ENCODE measurements at regions of chr6 and their contacts with region 1.

Region 1: DNA sequence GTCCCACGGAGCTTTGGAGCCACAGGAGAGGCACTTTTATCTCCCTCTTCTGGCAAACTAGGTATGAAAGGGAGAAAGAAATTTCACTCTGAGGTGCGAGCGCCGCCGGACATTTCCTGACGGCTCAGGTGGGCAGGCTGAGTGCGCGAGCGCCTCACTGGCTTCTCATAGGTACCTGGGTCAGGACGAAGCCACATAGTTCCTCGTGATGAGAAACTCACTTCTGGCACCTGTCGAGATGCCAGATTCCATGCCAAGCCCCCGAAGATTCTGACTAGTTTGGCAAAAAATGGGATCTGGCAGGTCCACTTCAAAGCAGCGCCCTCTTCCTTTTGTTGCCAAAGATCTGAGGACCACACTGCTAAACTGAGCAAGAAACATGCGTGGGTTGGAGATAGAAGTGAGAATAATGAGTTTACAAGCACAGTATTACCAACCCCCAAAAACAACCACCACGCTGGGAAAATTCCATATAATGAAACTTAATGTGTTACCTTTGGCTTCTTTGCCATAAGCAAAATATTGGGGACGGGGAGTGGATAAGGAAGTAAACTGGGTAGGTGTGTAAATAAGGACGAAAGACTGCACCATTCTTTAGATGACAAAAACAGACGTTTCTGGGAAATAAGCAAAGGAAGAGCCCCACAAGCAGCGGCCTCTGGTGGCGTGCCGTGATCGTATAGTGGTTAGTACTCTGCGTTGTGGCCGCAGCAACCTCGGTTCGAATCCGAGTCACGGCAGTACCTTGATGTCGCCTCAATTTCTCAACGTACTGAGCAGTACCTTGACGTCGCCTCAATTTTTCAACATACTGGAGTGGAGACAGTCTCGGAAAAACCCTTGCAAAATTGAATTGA is 89.8 kb upstream of the PRSS16 start:
- DNase-seq: peak in 8 of 9 donors; percentile 77 to 92 (median 87)
- ATAC-seq: peak; percentile 86
- H3K4me3 ChIP-seq: peak overlapping the region; percentile 76
- H3K4me3 Mint-ChIP-seq: peak overlapping the region; percentile 82 to 94 (median 87)
- H3K27ac ChIP-seq: peak overlapping the region; percentile 54
- H3K27ac Mint-ChIP-seq: peak overlapping the region; percentile 80 to 96 (median 92)
- H3K4me1 ChIP-seq: peaks cover 12% of the 10 kb centered on the region in 2 donors
- H3K4me1 Mint-ChIP-seq: peaks cover 29 to 47% (median 43%) of the 10 kb centered on the region in 7 donors
- H3K27me3 ChIP-seq: no peaks in the 10 kb centered on the region
- H3K27me3 Mint-ChIP-seq: peaks cover 0 to 6% (median 0%) of the 10 kb centered on the region in 5 donors

Region 2: GRCh38 chr6:26607434-26608230 is 550.1 kb before region 1 on chr6:
- CTCF ChIA-PET with region 1: interaction called, 3 read pairs
- POLR2A ChIA-PET with region 1: no interaction called
- intact Hi-C with region 1: loop called (anchors 1 to 5 kb)
- DNase-seq: peak in 8 of 9 donors; percentile 37 to 75 (median 70)
- ATAC-seq: peak; percentile 95
- H3K4me3 ChIP-seq: peak overlapping the region; percentile 46
- H3K4me3 Mint-ChIP-seq: peak overlapping the region; percentile 19 to 79 (median 56)
- H3K27ac ChIP-seq: no peak overlapping the region
- H3K27ac Mint-ChIP-seq: peak overlapping the region in 7 of 9 donors; percentile 22 to 68 (median 55)
- H3K4me1 ChIP-seq: no peaks in the 10 kb centered on the region
- H3K4me1 Mint-ChIP-seq: peaks cover 6 to 14% (median 10%) of the 10 kb centered on the region in 7 donors
- H3K27me3 ChIP-seq: no peaks in the 10 kb centered on the region
- H3K27me3 Mint-ChIP-seq: peaks cover 0 to 20% (median 5%) of the 10 kb centered on the region in 5 donors

Region 3: DNA sequence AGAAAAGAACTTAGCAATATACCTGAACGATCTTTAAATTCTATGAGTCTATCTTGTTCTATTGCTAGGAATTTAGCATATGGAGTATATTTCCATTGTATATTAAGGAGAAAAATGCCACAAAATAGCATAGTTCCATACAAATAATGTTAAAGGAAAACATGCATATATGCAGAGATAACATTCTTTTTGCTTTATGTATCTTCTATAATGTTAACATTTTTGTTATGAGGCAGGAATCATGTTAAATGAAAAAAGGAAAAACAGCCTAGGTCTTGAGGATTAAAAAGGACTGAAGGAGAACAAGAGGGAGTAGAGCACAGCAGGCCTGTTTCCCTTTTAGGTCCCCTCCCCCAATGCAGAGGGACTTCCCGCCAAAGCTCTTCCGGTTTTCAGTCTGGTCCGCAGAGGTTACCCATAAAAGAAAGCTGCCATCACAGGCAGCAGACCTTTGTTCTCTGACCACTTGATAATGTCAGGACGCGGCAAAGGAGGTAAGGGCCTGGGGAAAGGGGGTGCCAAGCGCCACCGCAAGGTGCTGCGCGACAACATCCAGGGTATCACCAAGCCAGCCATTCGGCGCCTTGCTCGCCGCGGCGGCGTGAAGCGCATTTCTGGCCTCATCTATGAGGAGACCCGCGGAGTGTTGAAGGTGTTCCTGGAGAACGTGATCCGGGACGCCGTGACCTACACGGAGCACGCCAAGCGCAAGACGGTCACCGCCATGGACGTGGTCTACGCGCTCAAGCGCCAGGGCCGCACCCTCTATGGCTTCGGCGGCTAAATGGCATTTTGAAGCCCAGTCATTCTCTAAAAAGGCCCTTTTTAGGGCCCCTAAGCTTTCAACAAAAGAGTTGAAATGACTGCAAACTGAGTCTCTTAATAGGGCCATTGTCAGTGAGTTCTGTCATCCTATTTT is 18.6 kb before region 1 on chr6:
- CTCF ChIA-PET with region 1: interaction called, 4 read pairs
- POLR2A ChIA-PET with region 1: interaction called, 795 read pairs
- intact Hi-C with region 1: no loop called
- DNase-seq: peak; percentile 39 to 78 (median 67)
- ATAC-seq: peak; percentile 90
- H3K4me3 ChIP-seq: peak overlapping the region; percentile 74
- H3K4me3 Mint-ChIP-seq: peak overlapping the region; percentile 90 to 99 (median 98)
- H3K27ac ChIP-seq: peak overlapping the region; percentile 86
- H3K27ac Mint-ChIP-seq: peak overlapping the region; percentile 97 to 99 (median 98)
- H3K4me1 ChIP-seq: peaks cover 19 to 26% of the 10 kb centered on the region in 2 donors
- H3K4me1 Mint-ChIP-seq: peaks cover 29 to 80% (median 60%) of the 10 kb centered on the region in 7 donors
- H3K27me3 ChIP-seq: no peaks in the 10 kb centered on the region
- H3K27me3 Mint-ChIP-seq: no peaks in the 10 kb centered on the region

Region 4: DNA sequence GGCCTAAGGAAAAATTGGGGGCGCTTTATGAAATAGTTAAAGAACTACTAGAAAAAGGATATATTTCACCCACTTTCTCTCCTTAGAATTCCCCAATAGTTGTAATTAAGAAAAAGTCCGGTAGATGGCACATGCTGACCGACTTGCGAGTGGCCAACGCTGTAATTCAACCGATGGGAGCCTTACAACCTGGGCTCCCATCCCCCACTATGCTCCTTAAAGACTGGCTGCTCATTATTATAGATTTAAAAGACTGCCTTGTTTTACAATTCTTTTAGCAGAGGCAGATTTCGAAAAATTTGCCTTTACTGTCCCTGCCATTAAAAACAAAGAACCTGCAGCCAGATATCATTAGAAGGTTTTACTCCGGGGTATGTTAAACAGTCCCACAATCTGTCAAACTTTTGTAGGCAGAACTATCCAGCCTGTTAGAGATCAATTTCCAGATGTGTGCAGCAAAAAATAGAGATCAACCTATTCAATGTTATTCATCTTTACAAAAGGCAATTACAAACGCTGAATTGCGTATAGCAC is 31.3 kb after region 1 on chr6:
- CTCF ChIA-PET with region 1: interaction called, 4 read pairs
- POLR2A ChIA-PET with region 1: no interaction called
- intact Hi-C with region 1: loop called (anchors 1 kb)
- DNase-seq: peak in 8 of 9 donors; percentile 44 to 69 (median 65)
- ATAC-seq: peak; percentile 90
- H3K4me3 ChIP-seq: peak overlapping the region; percentile 81
- H3K4me3 Mint-ChIP-seq: peak overlapping the region; percentile 82 to 99 (median 93)
- H3K27ac ChIP-seq: peak overlapping the region; percentile 58
- H3K27ac Mint-ChIP-seq: peak overlapping the region in 8 of 9 donors; percentile 44 to 79 (median 64)
- H3K4me1 ChIP-seq: peaks cover 3% of the 10 kb centered on the region in 2 donors
- H3K4me1 Mint-ChIP-seq: peaks cover 9 to 20% (median 15%) of the 10 kb centered on the region in 7 donors
- H3K27me3 ChIP-seq: no peaks in the 10 kb centered on the region
- H3K27me3 Mint-ChIP-seq: peaks cover 0 to 3% (median 0%) of the 10 kb centered on the region in 5 donors

Region 5: GRCh38 chr6:27293436-27294098 is 135.9 kb after region 1 on chr6:
- CTCF ChIA-PET with region 1: no interaction called
- POLR2A ChIA-PET with region 1: no interaction called
- intact Hi-C with region 1: no loop called
- DNase-seq: no peak
- ATAC-seq: no peak
- H3K4me3 ChIP-seq: no peak overlapping the region
- H3K4me3 Mint-ChIP-seq: peak overlapping the region in 2 of 10 donors; percentile 11 to 43
- H3K27ac ChIP-seq: no peak overlapping the region
- H3K27ac Mint-ChIP-seq: peak overlapping the region in 6 of 9 donors; percentile 7 to 67 (median 38)
- H3K4me1 ChIP-seq: no peaks in the 10 kb centered on the region
- H3K4me1 Mint-ChIP-seq: peaks cover 0 to 5% (median 0%) of the 10 kb centered on the region in 7 donors
- H3K27me3 ChIP-seq: peaks cover 25 to 82% of the 10 kb centered on the region in 2 donors
- H3K27me3 Mint-ChIP-seq: peaks cover 81 to 95% (median 93%) of the 10 kb centered on the region in 5 donors

Region 6: DNA sequence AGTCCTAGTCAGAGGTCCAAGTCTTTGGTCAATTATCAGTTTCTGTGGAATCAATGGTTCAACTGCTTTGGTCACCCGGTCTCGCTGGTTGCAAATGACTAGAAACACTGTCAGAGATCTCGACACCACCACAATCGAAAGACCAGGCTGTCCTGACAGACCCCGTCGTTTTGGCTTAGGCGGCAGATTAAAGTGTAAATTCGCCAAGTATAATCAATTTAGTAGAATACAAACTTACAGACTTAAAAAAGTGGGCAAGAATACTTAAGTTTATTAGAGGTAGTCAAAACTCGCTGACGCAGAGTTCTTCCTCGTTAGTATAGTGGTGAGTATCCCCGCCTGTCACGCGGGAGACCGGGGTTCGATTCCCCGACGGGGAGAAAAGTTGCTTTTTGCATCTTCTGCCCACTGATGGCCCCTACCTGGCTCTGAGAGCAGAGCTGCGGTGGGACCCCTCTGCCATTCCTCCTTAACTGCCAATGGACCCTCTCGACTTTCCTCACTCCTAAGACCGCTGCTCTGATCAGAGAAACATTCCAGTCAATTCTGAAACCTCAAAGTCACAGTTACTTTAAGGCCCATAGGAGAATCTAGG is 345.8 kb after region 1 on chr6:
- CTCF ChIA-PET with region 1: no interaction called
- POLR2A ChIA-PET with region 1: no interaction called
- intact Hi-C with region 1: loop called in 1 of 2 experiments (anchors 5 kb)
- DNase-seq: peak; percentile 73 to 86 (median 80)
- ATAC-seq: peak; percentile 75
- H3K4me3 ChIP-seq: peak overlapping the region; percentile 61
- H3K4me3 Mint-ChIP-seq: peak overlapping the region; percentile 85 to 99 (median 91)
- H3K27ac ChIP-seq: peak overlapping the region; percentile 57
- H3K27ac Mint-ChIP-seq: peak overlapping the region; percentile 82 to 97 (median 91)
- H3K4me1 ChIP-seq: peaks cover 6% of the 10 kb centered on the region in 2 donors
- H3K4me1 Mint-ChIP-seq: peaks cover 15 to 41% (median 36%) of the 10 kb centered on the region in 7 donors
- H3K27me3 ChIP-seq: no peaks in the 10 kb centered on the region
- H3K27me3 Mint-ChIP-seq: peaks cover 5 to 62% (median 11%) of the 10 kb centered on the region in 5 donors

Region 7: GRCh38 chr6:27772261-27773001 is 614.7 kb after region 1 on chr6:
- CTCF ChIA-PET with region 1: interaction called, 3 read pairs
- POLR2A ChIA-PET with region 1: no interaction called
- intact Hi-C with region 1: loop called in 1 of 2 experiments (anchors 1 kb)
- DNase-seq: peak; percentile 72 to 88 (median 82)
- ATAC-seq: peak; percentile 98
- H3K4me3 ChIP-seq: no peak overlapping the region
- H3K4me3 Mint-ChIP-seq: peak overlapping the region in 6 of 10 donors; percentile 14 to 59 (median 34)
- H3K27ac ChIP-seq: no peak overlapping the region
- H3K27ac Mint-ChIP-seq: peak overlapping the region in 2 of 9 donors; percentile 7 to 8
- H3K4me1 ChIP-seq: peaks cover 3 to 5% of the 10 kb centered on the region in 2 donors
- H3K4me1 Mint-ChIP-seq: peaks cover 6 to 20% (median 7%) of the 10 kb centered on the region in 7 donors
- H3K27me3 ChIP-seq: no peaks in the 10 kb centered on the region
- H3K27me3 Mint-ChIP-seq: peaks cover 1 to 35% (median 10%) of the 10 kb centered on the region in 5 donors

Region 8: DNA sequence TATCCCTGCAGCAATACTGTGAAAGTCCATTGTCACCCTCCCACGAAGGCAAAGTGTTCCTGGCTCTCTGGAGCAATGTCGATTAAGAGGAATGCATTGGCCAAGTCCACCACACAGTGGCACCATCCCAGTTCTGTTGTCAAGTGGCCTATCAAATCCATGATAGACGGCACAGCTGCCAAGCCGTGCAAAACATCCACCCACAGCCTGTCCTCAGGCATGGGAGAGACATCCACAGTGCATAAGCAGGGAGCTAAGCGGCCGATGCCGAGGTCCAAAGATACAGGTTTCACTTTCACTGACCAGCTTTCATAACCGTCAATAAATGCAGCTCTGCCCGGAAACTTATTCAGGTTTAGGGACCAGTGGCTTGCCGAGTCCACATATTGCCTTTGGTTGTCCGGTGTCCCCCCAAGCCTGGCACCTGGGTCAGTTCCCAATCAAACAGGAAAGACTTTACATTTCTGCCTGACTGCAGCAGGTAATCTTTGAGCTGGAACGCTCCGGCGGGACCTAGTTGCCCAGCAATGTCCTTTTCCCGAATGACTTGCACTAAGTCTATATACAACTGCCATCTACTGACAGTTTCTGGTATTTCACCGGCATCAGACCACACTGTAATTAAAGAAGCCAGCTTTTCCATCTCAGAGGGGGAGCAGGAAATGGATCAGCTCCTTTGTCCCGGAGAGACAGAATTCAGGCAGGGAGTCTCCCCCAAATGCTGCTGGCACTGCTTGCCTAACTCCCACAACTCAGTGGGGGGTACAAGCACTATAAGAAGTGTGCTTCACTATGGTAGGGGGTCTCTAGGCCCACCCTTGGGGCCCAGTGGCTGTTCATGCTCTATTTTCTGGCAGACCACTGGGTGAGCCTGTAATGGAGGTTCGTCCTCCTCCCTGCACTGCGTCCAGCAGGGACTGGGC is 1198.3 kb after region 1 on chr6:
- CTCF ChIA-PET with region 1: no interaction called
- POLR2A ChIA-PET with region 1: no interaction called
- intact Hi-C with region 1: loop called in 1 of 2 experiments (anchors 1 kb)
- DNase-seq: peak; percentile 26 to 69 (median 54)
- ATAC-seq: peak; percentile 92
- H3K4me3 ChIP-seq: peak overlapping the region; percentile 69
- H3K4me3 Mint-ChIP-seq: peak overlapping the region; percentile 78 to 96 (median 92)
- H3K27ac ChIP-seq: no peak overlapping the region
- H3K27ac Mint-ChIP-seq: peak overlapping the region; percentile 21 to 89 (median 62)
- H3K4me1 ChIP-seq: peaks cover 0 to 7% of the 10 kb centered on the region in 2 donors
- H3K4me1 Mint-ChIP-seq: peaks cover 16 to 38% (median 34%) of the 10 kb centered on the region in 7 donors
- H3K27me3 ChIP-seq: no peaks in the 10 kb centered on the region
- H3K27me3 Mint-ChIP-seq: no peaks in the 10 kb centered on the region

Measured in naive thymus-derived CD4-positive, alpha-beta T cell (primary cell).